Thyroid gland (tissue), 4 donors: ENCODE measurements at regions of chr6 and their contacts with region 1.

Region 1: GRCh38 chr6:151323791-151324487 is 67.4 kb downstream of the ZBTB2 start:
- DNase-seq: peak; percentile 79 to 85
- H3K4me3 ChIP-seq: no peak overlapping the region
- H3K27ac ChIP-seq: peak overlapping the region; percentile 16 to 53 (median 47)
- H3K4me1 ChIP-seq: peaks cover 15 to 16% of the 10 kb centered on the region in 2 donors
- H3K27me3 ChIP-seq: no peaks in the 10 kb centered on the region
- CTCF ChIP-seq: peak; percentile 92 to 99 (median 97)
- POLR2A ChIP-seq: no peak

Region 2: GRCh38 chr6:151014404-151015100 is 309.4 kb before region 1 on chr6:
- intact Hi-C with region 1: loop called (anchors 2 kb)
- DNase-seq: peak; percentile 66 to 73
- H3K4me3 ChIP-seq: no peak overlapping the region
- H3K27ac ChIP-seq: no peak overlapping the region
- H3K4me1 ChIP-seq: peaks cover 6 to 13% of the 10 kb centered on the region in 2 donors
- H3K27me3 ChIP-seq: no peaks in the 10 kb centered on the region
- CTCF ChIP-seq: peak; percentile 97 to 99 (median 98)
- POLR2A ChIP-seq: no peak

Region 3: GRCh38 chr6:151179321-151179720 is 144.6 kb before region 1 on chr6:
- intact Hi-C with region 1: loop called (anchors 10 kb)
- DNase-seq: no peak
- H3K4me3 ChIP-seq: no peak overlapping the region
- H3K27ac ChIP-seq: no peak overlapping the region
- H3K4me1 ChIP-seq: peaks cover 7 to 12% of the 10 kb centered on the region in 2 donors
- H3K27me3 ChIP-seq: no peaks in the 10 kb centered on the region
- CTCF ChIP-seq: no peak
- POLR2A ChIP-seq: no peak

Region 4: GRCh38 chr6:151240036-151240685 is 83.8 kb before region 1 on chr6:
- intact Hi-C with region 1: loop called (anchors 5 kb)
- DNase-seq: peak; percentile 82 to 83
- H3K4me3 ChIP-seq: peak overlapping the region; percentile 57 to 80 (median 72)
- H3K27ac ChIP-seq: peak overlapping the region; percentile 66 to 85 (median 76)
- H3K4me1 ChIP-seq: peaks cover 15 to 20% of the 10 kb centered on the region in 2 donors
- H3K27me3 ChIP-seq: no peaks in the 10 kb centered on the region
- CTCF ChIP-seq: no peak
- POLR2A ChIP-seq: peak in 1 of 2 donors; percentile 51